ENCODE measurements at regions of chr5 and their contacts with region 1.

Region 1: DNA sequence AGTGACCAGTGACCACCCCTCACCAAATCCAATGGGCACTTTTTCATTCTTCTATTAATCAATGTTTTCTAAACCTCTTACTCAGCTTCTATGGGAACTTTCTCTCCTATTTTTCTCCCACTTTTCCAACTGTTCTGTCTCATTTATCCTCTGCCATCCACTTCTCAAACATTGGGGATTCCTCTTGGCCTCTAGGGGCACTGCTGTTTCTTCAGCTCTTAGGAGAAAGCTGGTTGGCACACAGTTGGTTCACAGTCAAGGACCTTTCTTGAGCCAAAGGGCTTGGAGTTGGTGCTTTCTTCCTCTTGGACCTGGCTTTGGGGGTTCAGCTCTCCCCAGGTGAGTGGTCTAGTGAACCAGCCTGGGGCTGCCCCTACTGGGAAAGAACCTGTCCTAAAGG is 112.2 kb upstream of the LHFPL2 start:
- DNase-seq: no peak
- H3K4me3 ChIP-seq: no peak overlapping the region
- H3K27ac ChIP-seq: no peak overlapping the region
- H3K4me1 ChIP-seq: no peaks in the 10 kb centered on the region; a peak in 1 of 7 replicates
- H3K27me3 ChIP-seq: no peaks in the 10 kb centered on the region; a peak in 1 of 7 replicates
- CTCF ChIP-seq: peak; percentile 27 to 66 (median 43)
- EP300 ChIP-seq: no peak
- POLR2A ChIP-seq: no peak
- RAD21 ChIP-seq: peak; percentile 40 to 52; a peak in 3 of 4 replicates

Region 2: DNA sequence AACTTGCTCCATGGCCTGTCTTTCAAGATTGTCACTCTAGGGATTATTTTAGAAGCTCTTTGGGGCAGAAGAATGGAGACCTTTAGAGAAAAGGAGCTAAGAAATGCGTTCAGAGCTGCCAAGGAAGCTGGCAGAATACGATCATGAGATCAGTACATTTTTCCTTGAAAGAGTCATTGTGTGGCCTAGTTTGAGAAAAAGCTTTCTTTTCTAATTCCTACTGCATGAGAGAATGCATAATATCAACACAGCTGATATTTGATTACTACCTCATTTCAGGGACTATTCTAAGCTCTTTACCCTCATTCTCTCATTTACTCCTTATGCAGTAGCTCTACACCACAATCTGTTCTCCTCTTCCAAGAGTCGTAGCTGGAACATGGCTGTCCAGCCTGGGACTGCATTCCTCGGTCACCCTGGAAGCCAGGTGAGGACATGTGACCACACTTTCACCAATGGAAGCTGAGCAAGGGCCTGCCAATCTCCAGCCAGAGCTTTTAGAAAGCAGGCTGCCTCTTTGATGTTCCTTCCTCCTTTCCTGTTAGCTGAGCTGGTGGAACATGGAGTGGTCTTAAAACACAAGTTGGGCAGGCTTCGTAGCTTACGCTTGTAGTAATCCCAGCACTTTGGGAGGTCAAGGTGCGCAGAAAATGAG is 12.9 kb before region 1 on chr5:
- CTCF ChIA-PET with region 1: interaction called, 12 read pairs
- POLR2A ChIA-PET with region 1: no interaction called
- DNase-seq: no peak
- H3K4me3 ChIP-seq: no peak overlapping the region
- H3K27ac ChIP-seq: no peak overlapping the region
- H3K4me1 ChIP-seq: peaks cover 0 to 4% (median 1%) of the 10 kb centered on the region in 4 experiments; a peak in 2 of 7 replicates
- H3K27me3 ChIP-seq: no peaks in the 10 kb centered on the region
- CTCF ChIP-seq: no peak
- EP300 ChIP-seq: no peak
- POLR2A ChIP-seq: no peak
- RAD21 ChIP-seq: no peak

Region 3: DNA sequence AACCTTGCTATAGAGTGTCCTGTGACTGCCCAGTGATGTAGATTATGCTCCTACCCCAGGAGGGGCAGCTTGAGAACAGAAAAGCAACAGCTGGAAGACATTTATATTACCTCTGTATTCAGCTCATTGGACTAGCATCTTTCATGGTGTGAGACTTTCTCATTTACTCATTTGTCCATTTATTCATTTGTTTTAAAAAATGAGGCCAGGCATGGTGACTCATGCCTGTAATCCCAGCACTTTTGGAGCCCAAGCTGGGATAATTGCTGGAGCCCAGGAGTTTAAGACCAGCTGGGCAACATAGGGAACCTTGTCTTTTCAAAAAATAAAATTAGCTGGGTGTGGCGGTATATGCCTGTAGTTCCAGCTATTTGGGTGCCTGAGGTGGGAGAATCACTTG is 17.8 kb after region 1 on chr5:
- CTCF ChIA-PET with region 1: interaction called, 11 read pairs
- POLR2A ChIA-PET with region 1: no interaction called
- DNase-seq: no peak
- H3K4me3 ChIP-seq: no peak overlapping the region
- H3K27ac ChIP-seq: no peak overlapping the region
- H3K4me1 ChIP-seq: no peaks in the 10 kb centered on the region
- H3K27me3 ChIP-seq: no peaks in the 10 kb centered on the region
- CTCF ChIP-seq: no peak
- EP300 ChIP-seq: no peak
- POLR2A ChIP-seq: no peak
- RAD21 ChIP-seq: no peak

Measured in H1 (cell line).